ENCODE measurements at regions of chr16 and their contacts with region 1.

Region 1: DNA sequence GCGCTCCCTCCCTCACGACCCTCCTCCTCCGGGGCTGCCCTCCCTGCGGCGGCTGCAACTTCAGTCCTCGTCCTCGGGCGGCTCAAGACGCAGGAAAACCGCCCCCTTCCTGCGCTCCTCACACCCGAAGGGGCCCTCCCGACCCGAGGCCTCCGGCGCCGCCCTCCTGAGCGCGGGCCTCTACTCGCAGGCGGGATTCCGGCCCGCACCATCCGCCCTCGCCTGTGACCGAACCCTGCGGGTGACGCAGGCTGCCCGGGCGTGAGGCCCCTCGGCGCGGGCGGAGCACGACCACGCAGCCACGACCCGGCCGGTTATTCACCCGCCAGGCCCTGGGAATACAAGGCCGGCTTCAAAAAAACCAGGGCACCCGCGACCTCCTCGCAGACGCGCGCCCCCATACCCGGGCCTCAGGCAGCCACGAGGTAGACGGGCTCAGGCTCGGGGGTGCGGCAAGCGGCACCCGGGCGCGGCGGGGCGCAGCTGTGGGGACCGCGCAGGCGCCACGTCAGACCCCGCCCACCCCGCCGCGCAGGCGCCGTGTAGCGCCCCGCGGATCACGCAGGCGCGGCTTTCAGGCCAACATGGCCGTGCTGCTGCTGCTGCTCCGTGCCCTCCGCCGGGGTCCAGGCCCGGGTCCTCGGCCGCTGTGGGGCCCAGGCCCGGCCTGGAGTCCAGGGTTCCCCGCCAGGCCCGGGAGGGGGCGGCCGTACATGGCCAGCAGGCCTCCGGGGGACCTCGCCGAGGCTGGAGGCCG is at the start of gene SPG7:
- DNase-seq: peak; percentile 91
- H3K4me3 Mint-ChIP-seq: peak within 1 kb of the TSS; percentile 97
- H3K27ac Mint-ChIP-seq: peak within 1 kb of the TSS; percentile 96
- H3K4me1 Mint-ChIP-seq: peaks cover 22% of the 10 kb centered on the region
- H3K27me3 Mint-ChIP-seq: no peaks in the 10 kb centered on the region
- total RNA-seq, gene SPG7: 106 and 112 TPM in 2 replicates

Region 2: GRCh38 chr16:89241187-89242007 is 266.6 kb before region 1 on chr16:
- intact Hi-C with region 1: loop called (anchors 1 kb)
- DNase-seq: peak; percentile 72
- H3K4me3 Mint-ChIP-seq: peak overlapping the region; percentile 95
- H3K27ac Mint-ChIP-seq: peak overlapping the region; percentile 97
- H3K4me1 Mint-ChIP-seq: peaks cover 5% of the 10 kb centered on the region
- H3K27me3 Mint-ChIP-seq: peaks cover 2% of the 10 kb centered on the region

Region 3: GRCh38 chr16:89325861-89326471 is 182.0 kb before region 1 on chr16:
- intact Hi-C with region 1: loop called (anchors 1 kb)
- DNase-seq: no peak
- H3K4me3 Mint-ChIP-seq: peak overlapping the region; percentile 62
- H3K27ac Mint-ChIP-seq: peak overlapping the region; percentile 73
- H3K4me1 Mint-ChIP-seq: peaks cover 71% of the 10 kb centered on the region
- H3K27me3 Mint-ChIP-seq: no peaks in the 10 kb centered on the region

Region 4: GRCh38 chr16:89363621-89364393 is 144.2 kb before region 1 on chr16:
- intact Hi-C with region 1: loop called (anchors 2 kb)
- DNase-seq: peak; percentile 42
- H3K4me3 Mint-ChIP-seq: peak overlapping the region; percentile 63
- H3K27ac Mint-ChIP-seq: peak overlapping the region; percentile 81
- H3K4me1 Mint-ChIP-seq: peaks cover 97% of the 10 kb centered on the region
- H3K27me3 Mint-ChIP-seq: no peaks in the 10 kb centered on the region

Region 5: GRCh38 chr16:89490387-89491237 is 17.4 kb before region 1 on chr16 and contains the start of gene ANKRD11:
- intact Hi-C with region 1: loop called (anchors 1 kb)
- DNase-seq: peak; percentile 99
- H3K4me3 Mint-ChIP-seq: peak within 1 kb of the TSS; percentile 96
- H3K27ac Mint-ChIP-seq: peak within 1 kb of the TSS; percentile 99
- H3K4me1 Mint-ChIP-seq: peaks cover 52% of the 10 kb centered on the region
- H3K27me3 Mint-ChIP-seq: no peaks in the 10 kb centered on the region
- total RNA-seq, gene ANKRD11: 176 and 179 TPM in 2 replicates

Region 6: GRCh38 chr16:89641458-89642119 is 133.6 kb after region 1 on chr16:
- intact Hi-C with region 1: loop called (anchors 1 kb)
- DNase-seq: no peak
- H3K4me3 Mint-ChIP-seq: no peak overlapping the region
- H3K27ac Mint-ChIP-seq: no peak overlapping the region
- H3K4me1 Mint-ChIP-seq: peaks cover 10% of the 10 kb centered on the region
- H3K27me3 Mint-ChIP-seq: peaks cover 2% of the 10 kb centered on the region

Measured in activated T-helper 1 cell treated with anti-CD3 and anti-CD28 coated beads, Interleukin-12 subunit alpha, Interleukin-12 subunit beta, Interleukin-2, Interleukin-4 antibody, amounts not matched to agents 30 ng/mL and 10 ng/mL and 1 ng/mL, durations not matched to agents 14 hours and 24 hours and 36 hours (primary cell).